CD4-positive, alpha-beta T cell (primary cell): ENCODE measurements at regions of chr1 and their contacts with region 1.

Region 1: GRCh38 chr1:87292684-87293493 is 35.8 kb upstream of the LMO4 start:
- DNase-seq: peak; percentile 12 to 81 (median 44)
- ATAC-seq: peak; percentile 52
- H3K4me3 ChIP-seq: no peak overlapping the region
- H3K4me3 Mint-ChIP-seq: no peak overlapping the region
- H3K27ac ChIP-seq: no peak overlapping the region
- H3K27ac Mint-ChIP-seq: no peak overlapping the region
- H3K4me1 ChIP-seq: no peaks in the 10 kb centered on the region
- H3K4me1 Mint-ChIP-seq: no peaks in the 10 kb centered on the region
- H3K27me3 ChIP-seq: no peaks in the 10 kb centered on the region
- H3K27me3 Mint-ChIP-seq: peaks cover 7% of the 10 kb centered on the region
- CTCF ChIP-seq: peak; percentile 87

Region 2: GRCh38 chr1:87449348-87449963 is 156.6 kb after region 1 on chr1:
- CTCF ChIA-PET with region 1: no interaction called
- POLR2A ChIA-PET with region 1: no interaction called
- intact Hi-C with region 1: loop called in 1 of 2 experiments (anchors 2 kb)
- DNase-seq: peak in 6 of 14 experiments; percentile 4 to 53 (median 28)
- ATAC-seq: peak; percentile 61
- H3K4me3 ChIP-seq: peak overlapping the region; percentile 1
- H3K4me3 Mint-ChIP-seq: peak overlapping the region; percentile 52
- H3K27ac ChIP-seq: peak overlapping the region in 1 of 2 donors; percentile 57
- H3K27ac Mint-ChIP-seq: peak overlapping the region; percentile 73
- H3K4me1 ChIP-seq: peaks cover 3% of the 10 kb centered on the region
- H3K4me1 Mint-ChIP-seq: peaks cover 9% of the 10 kb centered on the region
- H3K27me3 ChIP-seq: no peaks in the 10 kb centered on the region
- H3K27me3 Mint-ChIP-seq: no peaks in the 10 kb centered on the region
- CTCF ChIP-seq: no peak

Region 3: GRCh38 chr1:87535551-87535950 is 242.7 kb after region 1 on chr1:
- CTCF ChIA-PET with region 1: no interaction called
- POLR2A ChIA-PET with region 1: no interaction called
- intact Hi-C with region 1: no loop called
- DNase-seq: no peak
- ATAC-seq: no peak
- H3K4me3 ChIP-seq: no peak overlapping the region
- H3K4me3 Mint-ChIP-seq: no peak overlapping the region
- H3K27ac ChIP-seq: no peak overlapping the region
- H3K27ac Mint-ChIP-seq: no peak overlapping the region
- H3K4me1 ChIP-seq: no peaks in the 10 kb centered on the region
- H3K4me1 Mint-ChIP-seq: no peaks in the 10 kb centered on the region
- H3K27me3 ChIP-seq: no peaks in the 10 kb centered on the region
- H3K27me3 Mint-ChIP-seq: peaks cover 9% of the 10 kb centered on the region
- CTCF ChIP-seq: no peak

Region 4: DNA sequence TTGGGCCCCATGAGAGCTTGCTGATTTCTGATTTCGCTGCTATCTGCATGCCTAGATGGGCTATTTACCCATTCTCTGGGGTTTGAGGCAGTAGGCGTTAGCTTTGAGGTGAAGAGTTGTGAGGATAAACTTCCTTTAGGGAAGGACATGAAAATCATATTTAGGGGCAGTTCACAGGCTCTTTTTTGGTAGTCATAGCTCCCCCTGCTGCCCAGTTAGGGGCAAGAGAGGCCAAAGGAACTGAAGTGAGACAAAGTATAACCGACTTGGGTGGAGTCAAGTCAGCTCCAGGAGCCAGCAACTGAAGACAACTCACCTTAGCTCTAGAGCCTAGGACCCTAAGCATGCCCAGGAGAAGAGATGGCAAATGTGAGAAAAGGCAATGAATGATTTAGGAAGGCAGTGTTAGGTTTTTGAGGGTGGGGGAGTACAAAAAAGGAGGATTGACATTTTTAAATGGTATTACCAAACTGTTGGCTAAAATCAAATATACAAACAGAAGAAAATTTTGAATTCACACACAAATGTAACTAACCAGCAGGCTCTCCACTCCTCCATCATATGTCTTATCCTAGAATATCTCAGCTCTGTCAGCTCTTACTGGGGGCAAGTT is 660.9 kb after region 1 on chr1:
- CTCF ChIA-PET with region 1: interaction called, 11 read pairs
- POLR2A ChIA-PET with region 1: no interaction called
- intact Hi-C with region 1: loop called (anchors 1 kb)
- DNase-seq: peak; percentile 7 to 69 (median 32)
- ATAC-seq: no peak
- H3K4me3 ChIP-seq: no peak overlapping the region
- H3K4me3 Mint-ChIP-seq: no peak overlapping the region
- H3K27ac ChIP-seq: no peak overlapping the region
- H3K27ac Mint-ChIP-seq: no peak overlapping the region
- H3K4me1 ChIP-seq: no peaks in the 10 kb centered on the region
- H3K4me1 Mint-ChIP-seq: no peaks in the 10 kb centered on the region
- H3K27me3 ChIP-seq: no peaks in the 10 kb centered on the region
- H3K27me3 Mint-ChIP-seq: peaks cover 28% of the 10 kb centered on the region
- CTCF ChIP-seq: peak; percentile 70

Region 5: GRCh38 chr1:88061492-88062177 is 768.7 kb after region 1 on chr1:
- CTCF ChIA-PET with region 1: no interaction called
- POLR2A ChIA-PET with region 1: no interaction called
- intact Hi-C with region 1: loop called (anchors 2 to 10 kb)
- DNase-seq: peak in 2 of 14 experiments; percentile 11 to 14
- ATAC-seq: no peak
- H3K4me3 ChIP-seq: no peak overlapping the region
- H3K4me3 Mint-ChIP-seq: no peak overlapping the region
- H3K27ac ChIP-seq: no peak overlapping the region
- H3K27ac Mint-ChIP-seq: no peak overlapping the region
- H3K4me1 ChIP-seq: no peaks in the 10 kb centered on the region
- H3K4me1 Mint-ChIP-seq: no peaks in the 10 kb centered on the region
- H3K27me3 ChIP-seq: no peaks in the 10 kb centered on the region
- H3K27me3 Mint-ChIP-seq: no peaks in the 10 kb centered on the region
- CTCF ChIP-seq: no peak

Region 6: GRCh38 chr1:88549536-88549935 is 1256.6 kb after region 1 on chr1:
- CTCF ChIA-PET with region 1: no interaction called
- POLR2A ChIA-PET with region 1: no interaction called
- intact Hi-C with region 1: loop called in 1 of 2 experiments (anchors 2 kb)
- DNase-seq: no peak
- ATAC-seq: no peak
- H3K4me3 ChIP-seq: no peak overlapping the region
- H3K4me3 Mint-ChIP-seq: no peak overlapping the region
- H3K27ac ChIP-seq: no peak overlapping the region
- H3K27ac Mint-ChIP-seq: no peak overlapping the region
- H3K4me1 ChIP-seq: no peaks in the 10 kb centered on the region
- H3K4me1 Mint-ChIP-seq: no peaks in the 10 kb centered on the region
- H3K27me3 ChIP-seq: no peaks in the 10 kb centered on the region
- H3K27me3 Mint-ChIP-seq: peaks cover 8% of the 10 kb centered on the region
- CTCF ChIP-seq: no peak

Region 7: GRCh38 chr1:88595355-88596002 is 1302.6 kb after region 1 on chr1:
- CTCF ChIA-PET with region 1: no interaction called
- POLR2A ChIA-PET with region 1: no interaction called
- intact Hi-C with region 1: loop called (anchors 1 to 5 kb)
- DNase-seq: peak in 3 of 14 experiments; percentile 41 to 51 (median 46)
- ATAC-seq: peak; percentile 49
- H3K4me3 ChIP-seq: no peak overlapping the region
- H3K4me3 Mint-ChIP-seq: no peak overlapping the region
- H3K27ac ChIP-seq: no peak overlapping the region
- H3K27ac Mint-ChIP-seq: no peak overlapping the region
- H3K4me1 ChIP-seq: no peaks in the 10 kb centered on the region
- H3K4me1 Mint-ChIP-seq: no peaks in the 10 kb centered on the region
- H3K27me3 ChIP-seq: no peaks in the 10 kb centered on the region
- H3K27me3 Mint-ChIP-seq: peaks cover 11% of the 10 kb centered on the region
- CTCF ChIP-seq: peak; percentile 52